Activated CD4-positive, alpha-beta T cell treated with anti-CD3 and anti-CD28 coated beads for 36 hours (primary cell): ENCODE measurements at regions of chr5 and their contacts with region 1.

Region 1: GRCh38 chr5:150846654-150847333 is 473 bp downstream of the IRGM start:
- DNase-seq: peak; percentile 82
- ATAC-seq: peak; percentile 94
- H3K4me3 Mint-ChIP-seq: peak overlapping the region; percentile 67
- H3K27ac Mint-ChIP-seq: peak overlapping the region; percentile 93
- H3K4me1 Mint-ChIP-seq: peaks cover 22% of the 10 kb centered on the region
- H3K27me3 Mint-ChIP-seq: no peaks in the 10 kb centered on the region

Region 2: DNA sequence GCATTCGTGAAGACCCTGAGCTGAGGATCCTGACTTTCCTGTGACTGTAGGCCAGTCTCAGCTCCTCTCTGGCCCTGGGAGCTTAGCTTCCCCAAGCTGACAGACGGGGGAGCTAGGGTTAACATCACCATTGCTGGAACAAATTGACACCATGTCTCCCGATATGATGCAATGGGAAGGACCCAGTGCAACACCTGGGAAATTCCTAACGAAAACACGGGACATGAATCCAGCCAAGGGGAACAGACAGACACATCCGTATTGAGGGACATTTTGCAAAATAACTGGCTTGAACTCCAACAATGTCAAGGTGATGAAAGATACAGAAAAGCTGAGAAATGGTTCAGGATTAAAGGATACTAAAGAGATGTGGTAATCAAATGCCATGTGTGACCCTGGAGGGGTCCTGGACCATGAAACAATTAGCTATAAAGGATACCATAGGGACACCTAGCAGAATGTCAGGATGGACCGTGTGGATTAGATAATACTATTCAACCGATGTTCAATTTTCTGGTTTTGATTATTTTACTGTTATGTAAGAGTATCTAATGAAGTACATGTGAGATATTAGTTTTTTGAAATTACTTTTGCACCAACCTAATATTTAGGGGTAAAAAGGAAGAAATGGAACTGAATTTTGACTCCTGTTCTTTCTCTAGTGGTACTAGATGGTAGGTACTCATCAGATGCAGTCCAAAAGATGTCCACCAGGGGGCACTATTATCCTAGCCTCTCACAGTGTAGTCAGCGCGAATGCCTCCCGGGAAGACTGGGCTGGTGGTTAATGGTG is 286.2 kb before region 1 on chr5:
- CTCF ChIA-PET with region 1: interaction called, 41 read pairs
- POLR2A ChIA-PET with region 1: no interaction called
- intact Hi-C with region 1: loop called (anchors 1 kb)
- DNase-seq: peak; percentile 92
- ATAC-seq: peak; percentile 97
- H3K4me3 Mint-ChIP-seq: no peak overlapping the region
- H3K27ac Mint-ChIP-seq: no peak overlapping the region
- H3K4me1 Mint-ChIP-seq: no peaks in the 10 kb centered on the region
- H3K27me3 Mint-ChIP-seq: no peaks in the 10 kb centered on the region

Region 3: DNA sequence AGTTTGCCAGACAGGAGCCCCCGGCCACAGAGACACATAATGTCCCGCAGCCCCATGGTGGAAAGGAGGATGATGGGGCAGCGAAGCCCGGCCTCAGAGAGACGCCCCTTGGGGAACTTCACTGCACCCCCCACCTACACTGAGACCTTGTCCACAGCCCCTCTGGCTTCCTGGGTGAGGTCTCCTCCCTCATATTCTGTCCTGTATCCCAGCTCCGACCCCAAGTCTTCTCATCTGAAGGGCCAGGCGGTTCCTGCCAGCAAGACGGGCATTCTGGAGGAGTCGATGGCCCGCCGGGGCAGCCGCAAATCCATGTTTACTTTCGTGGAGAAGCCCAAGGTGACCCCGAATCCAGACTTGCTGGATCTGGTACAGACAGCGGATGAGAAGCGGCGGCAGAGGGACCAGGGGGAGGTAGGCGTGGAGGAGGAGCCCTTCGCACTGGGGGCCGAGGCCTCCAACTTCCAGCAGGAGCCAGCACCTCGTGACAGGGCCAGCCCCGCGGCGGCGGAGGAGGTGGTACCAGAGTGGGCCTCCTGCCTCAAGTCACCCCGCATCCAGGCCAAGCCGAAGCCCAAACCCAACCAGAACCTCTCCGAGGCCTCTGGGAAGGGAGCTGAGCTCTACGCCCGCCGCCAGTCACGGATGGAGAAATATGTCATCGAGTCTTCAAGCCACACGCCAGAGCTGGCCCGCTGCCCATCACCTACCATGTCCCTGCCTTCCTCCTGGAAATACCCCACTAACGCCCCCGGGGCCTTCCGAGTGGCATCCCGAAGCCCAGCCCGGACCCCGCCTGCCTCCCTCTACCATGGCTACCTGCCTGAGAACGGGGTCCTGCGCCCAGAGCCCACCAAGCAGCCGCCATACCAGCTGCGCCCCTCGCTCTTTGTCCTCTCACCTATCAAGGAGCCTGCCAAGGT is 197.4 kb before region 1 on chr5:
- CTCF ChIA-PET with region 1: no interaction called
- POLR2A ChIA-PET with region 1: no interaction called
- intact Hi-C with region 1: no loop called
- DNase-seq: no peak
- ATAC-seq: no peak
- H3K4me3 Mint-ChIP-seq: no peak overlapping the region
- H3K27ac Mint-ChIP-seq: no peak overlapping the region
- H3K4me1 Mint-ChIP-seq: no peaks in the 10 kb centered on the region
- H3K27me3 Mint-ChIP-seq: no peaks in the 10 kb centered on the region

Region 4: GRCh38 chr5:150734579-150735384 is 112.0 kb before region 1 on chr5:
- CTCF ChIA-PET with region 1: interaction called, 7 read pairs
- POLR2A ChIA-PET with region 1: no interaction called
- intact Hi-C with region 1: loop called in 1 of 2 experiments (anchors 5 kb)
- DNase-seq: peak; percentile 59
- ATAC-seq: peak; percentile 79
- H3K4me3 Mint-ChIP-seq: no peak overlapping the region
- H3K27ac Mint-ChIP-seq: peak overlapping the region; percentile 76
- H3K4me1 Mint-ChIP-seq: peaks cover 50% of the 10 kb centered on the region
- H3K27me3 Mint-ChIP-seq: no peaks in the 10 kb centered on the region

Region 5: DNA sequence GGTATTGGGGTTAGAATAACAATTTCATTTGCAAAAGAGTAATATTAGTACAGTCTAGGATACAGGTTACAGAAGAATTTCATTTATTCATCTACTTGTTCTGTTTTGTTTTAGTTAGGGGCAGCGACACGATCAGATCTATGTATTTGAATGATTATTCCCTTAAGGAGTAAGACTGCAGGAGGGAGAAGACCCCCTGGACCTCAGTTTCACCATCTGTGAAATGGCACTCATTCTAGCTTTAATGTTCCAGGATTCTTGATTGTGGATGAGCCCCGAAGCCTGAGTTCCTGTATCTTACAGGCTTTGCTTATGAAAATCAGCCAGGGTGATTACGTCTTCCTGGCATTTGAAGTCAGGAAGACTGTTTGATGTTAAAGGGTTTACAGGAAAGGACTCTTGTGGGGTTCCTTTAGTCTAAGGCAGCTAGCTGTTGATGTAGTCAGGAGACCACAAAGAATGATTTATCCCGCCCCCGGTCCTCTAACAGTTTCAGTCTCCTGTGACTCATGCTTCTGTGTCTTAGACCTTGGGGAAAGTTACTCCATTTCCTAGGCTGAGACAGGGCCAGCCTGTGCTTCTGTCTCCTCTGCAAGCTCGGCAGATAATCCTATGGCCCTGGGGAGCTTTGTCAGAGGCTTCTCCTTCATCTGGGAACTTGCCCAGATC is 56.7 kb before region 1 on chr5:
- CTCF ChIA-PET with region 1: interaction called, 28 read pairs
- POLR2A ChIA-PET with region 1: interaction called, 12 read pairs
- intact Hi-C with region 1: loop called in 1 of 2 experiments (anchors 2 kb)
- DNase-seq: peak; percentile 88
- ATAC-seq: peak; percentile 98
- H3K4me3 Mint-ChIP-seq: peak overlapping the region; percentile 56
- H3K27ac Mint-ChIP-seq: peak overlapping the region; percentile 88
- H3K4me1 Mint-ChIP-seq: peaks cover 65% of the 10 kb centered on the region
- H3K27me3 Mint-ChIP-seq: no peaks in the 10 kb centered on the region

Region 6: GRCh38 chr5:151202381-151203139 is 355.8 kb after region 1 on chr5:
- CTCF ChIA-PET with region 1: no interaction called
- POLR2A ChIA-PET with region 1: no interaction called
- intact Hi-C with region 1: no loop called
- DNase-seq: peak; percentile 70
- ATAC-seq: peak; percentile 100
- H3K4me3 Mint-ChIP-seq: no peak overlapping the region
- H3K27ac Mint-ChIP-seq: peak overlapping the region; percentile 75
- H3K4me1 Mint-ChIP-seq: peaks cover 36% of the 10 kb centered on the region
- H3K27me3 Mint-ChIP-seq: no peaks in the 10 kb centered on the region